Transverse colon (tissue), 4 donors: ENCODE measurements at regions of chr16 and their contacts with region 1.

Region 1: DNA sequence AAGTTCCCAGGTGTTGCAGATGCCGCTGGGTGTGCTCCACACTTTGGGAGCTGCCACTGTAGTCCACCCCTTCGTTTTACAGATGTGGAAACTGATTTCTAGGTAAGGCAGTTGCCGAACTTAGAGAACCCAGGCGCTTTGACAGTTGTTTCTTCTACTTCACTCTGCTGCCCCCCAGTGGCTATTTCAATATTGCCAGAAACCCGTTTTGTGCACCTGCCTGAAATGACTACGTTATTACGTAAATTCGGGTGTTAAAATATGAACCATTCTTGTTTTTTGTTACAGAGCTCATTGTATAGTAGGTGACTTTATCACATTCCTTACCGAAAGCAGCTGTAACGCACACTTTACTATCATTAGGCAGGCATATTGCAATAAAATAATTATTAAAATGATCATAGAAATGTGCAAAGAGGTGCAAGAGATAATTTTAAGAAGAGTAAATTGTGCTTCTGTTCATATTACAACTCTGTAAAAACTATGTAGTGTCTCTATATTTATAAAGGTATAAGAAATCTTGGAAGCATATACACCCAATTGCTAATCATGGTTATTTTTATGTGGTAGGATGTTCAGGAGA is 44.9 kb downstream of the OTOA start:
- DNase-seq: peak; percentile 85
- H3K4me3 ChIP-seq: no peak overlapping the region
- H3K27ac ChIP-seq: no peak overlapping the region
- H3K4me1 ChIP-seq: peaks cover 0 to 8% (median 4%) of the 10 kb centered on the region in 4 donors
- H3K27me3 ChIP-seq: no peaks in the 10 kb centered on the region
- CTCF ChIP-seq: peak; percentile 71 to 87 (median 81)
- EP300 ChIP-seq: no peak
- POLR2A ChIP-seq: no peak

Region 2: GRCh38 chr16:21134053-21134452 is 574.6 kb before region 1 on chr16:
- in situ Hi-C with region 1: no loop called
- intact Hi-C with region 1: no loop called
- DNase-seq: no peak
- H3K4me3 ChIP-seq: no peak overlapping the region
- H3K27ac ChIP-seq: no peak overlapping the region
- H3K4me1 ChIP-seq: no peaks in the 10 kb centered on the region
- H3K27me3 ChIP-seq: no peaks in the 10 kb centered on the region
- CTCF ChIP-seq: no peak
- EP300 ChIP-seq: no peak
- POLR2A ChIP-seq: no peak

Region 3: GRCh38 chr16:21599233-21600030 is 109.2 kb before region 1 on chr16 and contains the start of gene METTL9:
- in situ Hi-C with region 1: loop called in 2 of 4 experiments (anchors 25 kb)
- intact Hi-C with region 1: no loop called
- DNase-seq: peak; percentile 95
- H3K4me3 ChIP-seq: peak within 1 kb of the TSS; percentile 83 to 95 (median 92)
- H3K27ac ChIP-seq: peak within 1 kb of the TSS; percentile 96 to 99 (median 98)
- H3K4me1 ChIP-seq: peaks cover 8 to 32% (median 16%) of the 10 kb centered on the region in 4 donors
- H3K27me3 ChIP-seq: no peaks in the 10 kb centered on the region
- CTCF ChIP-seq: peak in 1 of 5 experiments; percentile 24
- EP300 ChIP-seq: no peak
- POLR2A ChIP-seq: peak; percentile 80
- total RNA-seq, gene METTL9: 41.9 to 116 (median 67.5) TPM

Region 4: GRCh38 chr16:21626659-21627277 is 81.9 kb before region 1 on chr16:
- in situ Hi-C with region 1: no loop called
- intact Hi-C with region 1: no loop called
- DNase-seq: no peak
- H3K4me3 ChIP-seq: no peak overlapping the region
- H3K27ac ChIP-seq: peak overlapping the region; percentile 10 to 31 (median 22)
- H3K4me1 ChIP-seq: peaks cover 0 to 18% (median 8%) of the 10 kb centered on the region in 4 donors
- H3K27me3 ChIP-seq: no peaks in the 10 kb centered on the region
- CTCF ChIP-seq: no peak
- EP300 ChIP-seq: no peak
- POLR2A ChIP-seq: no peak

Region 5: GRCh38 chr16:21656795-21657768 is 51.5 kb before region 1 on chr16:
- in situ Hi-C with region 1: loop called in 1 of 4 experiments (anchors 5 kb)
- intact Hi-C with region 1: no loop called
- DNase-seq: no peak
- H3K4me3 ChIP-seq: no peak overlapping the region
- H3K27ac ChIP-seq: peak overlapping the region in 2 of 4 donors; percentile 13 to 18
- H3K4me1 ChIP-seq: peaks cover 0 to 9% (median 4%) of the 10 kb centered on the region in 4 donors
- H3K27me3 ChIP-seq: no peaks in the 10 kb centered on the region
- CTCF ChIP-seq: peak; percentile 65 to 87 (median 81)
- EP300 ChIP-seq: no peak
- POLR2A ChIP-seq: no peak